Activated CD4-positive, alpha-beta T cell treated with anti-CD3 and anti-CD28 coated beads for 36 hours (primary cell): ENCODE measurements at regions of chr1 and their contacts with region 1.

Region 1: DNA sequence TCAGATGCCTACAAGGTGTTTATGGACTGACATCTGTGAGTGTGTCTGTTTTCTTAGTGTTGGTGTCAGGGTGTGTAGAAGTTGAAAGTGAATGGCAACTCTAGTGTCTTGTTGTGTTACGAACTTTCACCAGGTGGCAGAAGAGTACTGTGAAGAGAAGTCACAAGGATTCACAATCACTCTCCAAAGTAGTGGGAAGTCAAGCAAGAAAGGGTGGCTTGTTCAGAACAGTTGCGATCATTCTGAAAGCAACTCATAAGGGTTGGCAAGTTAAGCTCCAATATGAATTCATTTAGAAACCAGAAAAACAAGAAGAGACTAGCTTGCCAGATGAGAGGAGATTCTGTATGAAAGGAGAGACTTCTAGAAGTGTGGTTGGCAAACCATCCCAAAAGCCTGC is 86.1 kb downstream of the FASLG start:
- DNase-seq: peak; percentile 44
- ATAC-seq: peak; percentile 90
- H3K4me3 Mint-ChIP-seq: no peak overlapping the region
- H3K27ac Mint-ChIP-seq: peak overlapping the region; percentile 7
- H3K4me1 Mint-ChIP-seq: peaks cover 32% of the 10 kb centered on the region
- H3K27me3 Mint-ChIP-seq: peaks cover 10% of the 10 kb centered on the region

Region 2: DNA sequence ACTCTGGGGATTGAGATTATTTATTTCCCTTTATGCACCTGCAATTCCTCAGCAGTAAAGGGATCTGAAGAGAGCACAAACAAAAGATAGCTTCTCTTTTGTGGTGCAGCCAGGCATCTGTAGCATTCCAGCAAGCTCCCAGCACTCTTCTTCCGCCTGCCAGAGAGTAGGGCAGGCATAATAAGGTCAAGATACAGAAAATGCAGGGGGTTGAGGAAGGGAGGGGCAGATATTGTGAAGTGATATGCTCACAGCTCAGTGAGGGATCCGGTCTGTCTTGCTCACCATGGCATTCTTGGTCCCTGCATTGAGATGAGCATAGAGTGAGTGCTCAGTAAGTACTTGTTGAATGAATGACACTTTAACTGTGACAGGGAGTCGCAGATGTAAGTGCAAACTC is 62.2 kb before region 1 on chr1:
- CTCF ChIA-PET with region 1: no interaction called
- POLR2A ChIA-PET with region 1: no interaction called
- intact Hi-C with region 1: no loop called
- DNase-seq: no peak
- ATAC-seq: no peak
- H3K4me3 Mint-ChIP-seq: no peak overlapping the region
- H3K27ac Mint-ChIP-seq: no peak overlapping the region
- H3K4me1 Mint-ChIP-seq: peaks cover 22% of the 10 kb centered on the region
- H3K27me3 Mint-ChIP-seq: no peaks in the 10 kb centered on the region

Region 3: GRCh38 chr1:172719694-172720138 is 25.3 kb before region 1 on chr1:
- CTCF ChIA-PET with region 1: interaction called, 39 read pairs
- POLR2A ChIA-PET with region 1: no interaction called
- intact Hi-C with region 1: no loop called
- DNase-seq: no peak
- ATAC-seq: peak; percentile 51
- H3K4me3 Mint-ChIP-seq: no peak overlapping the region
- H3K27ac Mint-ChIP-seq: no peak overlapping the region
- H3K4me1 Mint-ChIP-seq: peaks cover 35% of the 10 kb centered on the region
- H3K27me3 Mint-ChIP-seq: peaks cover 6% of the 10 kb centered on the region

Region 4: DNA sequence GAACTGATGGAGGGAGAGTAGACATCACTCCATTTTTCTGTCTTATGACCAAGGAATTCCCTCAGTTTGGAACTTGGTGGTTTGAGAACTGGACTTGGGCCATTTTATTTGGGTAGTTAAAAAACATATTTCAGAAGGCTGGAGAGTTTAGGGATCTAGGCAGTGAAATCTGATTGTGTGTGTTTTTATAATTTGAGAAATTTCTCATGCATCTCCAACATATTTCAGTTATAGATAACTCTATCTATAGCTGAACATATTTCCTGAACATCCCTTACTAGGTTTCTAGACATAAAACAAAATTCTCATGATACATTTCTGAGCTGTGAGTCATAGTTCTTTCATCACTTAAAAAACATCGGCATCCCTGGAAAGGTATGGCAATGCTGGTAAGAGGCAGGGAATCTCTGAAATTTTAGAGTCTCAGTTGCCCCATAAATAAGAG is 16.6 kb after region 1 on chr1:
- CTCF ChIA-PET with region 1: interaction called, 16 read pairs
- POLR2A ChIA-PET with region 1: no interaction called
- intact Hi-C with region 1: no loop called
- DNase-seq: no peak
- ATAC-seq: no peak
- H3K4me3 Mint-ChIP-seq: no peak overlapping the region
- H3K27ac Mint-ChIP-seq: no peak overlapping the region
- H3K4me1 Mint-ChIP-seq: peaks cover 43% of the 10 kb centered on the region
- H3K27me3 Mint-ChIP-seq: peaks cover 21% of the 10 kb centered on the region

Region 5: GRCh38 chr1:172837816-172838680 is 93.0 kb after region 1 on chr1:
- CTCF ChIA-PET with region 1: interaction called, 9 read pairs
- POLR2A ChIA-PET with region 1: no interaction called
- intact Hi-C with region 1: loop called (anchors 1 kb)
- DNase-seq: peak; percentile 29
- ATAC-seq: peak; percentile 99
- H3K4me3 Mint-ChIP-seq: no peak overlapping the region
- H3K27ac Mint-ChIP-seq: no peak overlapping the region
- H3K4me1 Mint-ChIP-seq: peaks cover 25% of the 10 kb centered on the region
- H3K27me3 Mint-ChIP-seq: peaks cover 48% of the 10 kb centered on the region

Region 6: DNA sequence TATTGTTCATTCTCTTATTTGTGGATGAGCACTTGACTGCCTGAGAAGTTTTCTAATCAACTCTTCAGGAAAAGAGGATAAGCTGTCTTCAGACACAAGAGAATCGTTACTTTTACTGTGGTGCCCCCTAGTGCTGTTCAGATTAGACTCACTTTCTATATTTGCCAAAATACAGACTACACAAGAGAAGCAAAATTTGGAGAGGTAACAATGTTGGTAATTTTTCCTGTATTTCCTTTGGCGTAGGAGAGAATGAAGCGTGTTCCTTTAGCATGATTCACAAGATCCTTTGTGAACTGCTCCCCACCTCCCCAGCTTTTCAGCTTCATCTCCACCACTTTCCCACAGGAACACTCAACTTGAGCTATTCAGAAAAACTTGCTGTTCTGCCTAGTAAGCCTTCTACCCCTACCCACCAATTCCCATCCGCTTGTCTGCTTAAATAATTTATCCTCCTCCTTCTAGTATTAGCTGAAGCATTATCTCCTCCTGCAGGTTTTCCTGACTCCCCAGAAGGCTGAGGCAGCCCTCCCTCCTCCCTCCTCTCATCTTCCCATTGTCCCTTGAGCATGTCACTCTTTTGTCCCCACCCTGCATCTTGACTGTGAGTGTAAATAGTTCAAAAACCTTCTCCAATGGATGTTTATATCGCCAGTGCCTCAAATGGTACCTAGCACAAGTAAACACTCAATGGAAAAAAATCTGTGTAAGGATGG is 457.6 kb after region 1 on chr1:
- CTCF ChIA-PET with region 1: interaction called, 150 read pairs
- POLR2A ChIA-PET with region 1: no interaction called
- intact Hi-C with region 1: loop called (anchors 1 kb)
- DNase-seq: peak; percentile 14
- ATAC-seq: no peak
- H3K4me3 Mint-ChIP-seq: no peak overlapping the region
- H3K27ac Mint-ChIP-seq: no peak overlapping the region
- H3K4me1 Mint-ChIP-seq: peaks cover 33% of the 10 kb centered on the region
- H3K27me3 Mint-ChIP-seq: peaks cover 13% of the 10 kb centered on the region

Region 7: GRCh38 chr1:173409613-173410012 is 664.6 kb after region 1 on chr1:
- CTCF ChIA-PET with region 1: no interaction called
- POLR2A ChIA-PET with region 1: no interaction called
- intact Hi-C with region 1: loop called (anchors 5 kb)
- DNase-seq: no peak
- ATAC-seq: no peak
- H3K4me3 Mint-ChIP-seq: no peak overlapping the region
- H3K27ac Mint-ChIP-seq: no peak overlapping the region
- H3K4me1 Mint-ChIP-seq: peaks cover 40% of the 10 kb centered on the region
- H3K27me3 Mint-ChIP-seq: no peaks in the 10 kb centered on the region

Region 8: GRCh38 chr1:174743654-174744561 is 1998.9 kb after region 1 on chr1:
- CTCF ChIA-PET with region 1: no interaction called
- POLR2A ChIA-PET with region 1: no interaction called
- intact Hi-C with region 1: loop called in 1 of 2 experiments (anchors 5 kb)
- DNase-seq: no peak
- ATAC-seq: no peak
- H3K4me3 Mint-ChIP-seq: no peak overlapping the region
- H3K27ac Mint-ChIP-seq: no peak overlapping the region
- H3K4me1 Mint-ChIP-seq: peaks cover 3% of the 10 kb centered on the region
- H3K27me3 Mint-ChIP-seq: no peaks in the 10 kb centered on the region